ENCODE measurements at regions of chr15 and their contacts with region 1.

Region 1: DNA sequence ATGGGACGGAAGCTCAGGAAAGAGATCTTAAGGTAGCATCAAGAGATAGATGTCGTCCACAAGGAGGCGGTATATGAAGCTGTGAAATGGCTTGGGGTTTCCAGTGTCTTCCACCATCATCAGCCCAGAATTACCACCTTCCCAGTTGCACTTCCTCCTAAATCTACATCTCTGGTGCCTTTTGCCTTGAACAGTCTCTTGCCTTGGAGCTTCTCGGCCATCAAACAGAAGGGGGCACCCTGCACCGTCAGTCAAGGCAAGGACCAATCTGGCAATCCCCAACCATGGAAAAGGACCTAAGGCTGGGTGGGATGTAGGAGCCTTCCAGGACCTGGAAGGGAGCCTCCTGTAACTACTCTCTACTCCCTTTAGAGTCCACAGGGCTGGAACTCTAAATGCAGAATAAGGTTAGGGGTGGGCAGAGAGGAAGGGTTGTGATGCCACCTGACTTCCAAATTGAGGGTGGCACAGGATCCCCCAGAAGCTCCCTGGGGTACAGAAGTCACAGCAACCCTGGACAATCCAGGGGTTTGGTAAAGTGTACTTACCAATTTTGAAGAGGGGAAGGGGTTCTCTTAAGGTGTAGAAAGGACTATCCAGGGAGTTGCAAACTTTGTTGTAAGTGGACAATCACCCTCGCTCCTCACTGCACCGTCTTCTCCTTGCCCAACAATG is 1.0 kb upstream of the RYR3 start:
- DNase-seq: peak in 1 of 2 donors; percentile 33
- ATAC-seq: peak; percentile 70 to 80 (median 76)
- H3K4me3 ChIP-seq: peak overlapping the region; percentile 47
- H3K27ac ChIP-seq: no peak overlapping the region
- H3K4me1 ChIP-seq: peaks cover 6% of the 10 kb centered on the region
- H3K27me3 ChIP-seq: peaks cover 0 to 19% (median 11%) of the 10 kb centered on the region in 3 donors
- CTCF ChIP-seq: peak; percentile 57

Region 2: DNA sequence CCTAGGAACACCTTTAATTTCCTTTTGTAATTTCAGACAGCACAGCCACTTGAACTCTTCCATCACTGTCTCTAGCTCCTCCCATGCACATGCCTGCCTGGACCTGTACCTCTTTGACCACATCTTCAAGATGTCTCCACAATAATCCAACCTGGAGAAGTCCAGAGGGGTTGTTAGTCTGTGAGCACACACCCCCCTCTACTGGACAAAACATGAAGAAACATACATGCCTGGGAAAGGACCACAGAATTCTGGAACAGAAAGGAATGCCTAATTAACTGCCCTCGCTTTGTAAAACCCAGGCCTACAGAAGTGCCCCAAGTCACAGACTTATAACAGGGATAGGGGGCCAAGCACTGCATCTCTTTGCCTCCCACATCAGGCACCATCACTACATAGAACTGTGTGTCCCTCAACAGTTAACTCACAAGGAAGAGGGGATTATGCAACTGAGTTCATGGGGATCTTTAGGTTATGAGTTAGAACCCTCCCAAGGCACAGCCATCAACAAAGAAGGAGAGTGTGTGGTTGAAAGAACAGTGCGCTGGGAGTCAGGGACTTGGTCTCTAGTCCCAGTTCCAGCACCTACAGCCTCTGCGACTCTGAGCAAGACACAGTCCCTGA is 176.9 kb before region 1 on chr15:
- intact Hi-C with region 1: no loop called
- DNase-seq: no peak
- ATAC-seq: peak; percentile 62 to 78 (median 66)
- H3K4me3 ChIP-seq: no peak overlapping the region
- H3K27ac ChIP-seq: no peak overlapping the region
- H3K4me1 ChIP-seq: peaks cover 38% of the 10 kb centered on the region
- H3K27me3 ChIP-seq: no peaks in the 10 kb centered on the region
- CTCF ChIP-seq: peak; percentile 67

Region 3: GRCh38 chr15:33262306-33262705 is 47.4 kb before region 1 on chr15:
- intact Hi-C with region 1: no loop called
- DNase-seq: no peak
- ATAC-seq: no peak
- H3K4me3 ChIP-seq: no peak overlapping the region
- H3K27ac ChIP-seq: no peak overlapping the region
- H3K4me1 ChIP-seq: no peaks in the 10 kb centered on the region
- H3K27me3 ChIP-seq: no peaks in the 10 kb centered on the region
- CTCF ChIP-seq: no peak

Region 4: DNA sequence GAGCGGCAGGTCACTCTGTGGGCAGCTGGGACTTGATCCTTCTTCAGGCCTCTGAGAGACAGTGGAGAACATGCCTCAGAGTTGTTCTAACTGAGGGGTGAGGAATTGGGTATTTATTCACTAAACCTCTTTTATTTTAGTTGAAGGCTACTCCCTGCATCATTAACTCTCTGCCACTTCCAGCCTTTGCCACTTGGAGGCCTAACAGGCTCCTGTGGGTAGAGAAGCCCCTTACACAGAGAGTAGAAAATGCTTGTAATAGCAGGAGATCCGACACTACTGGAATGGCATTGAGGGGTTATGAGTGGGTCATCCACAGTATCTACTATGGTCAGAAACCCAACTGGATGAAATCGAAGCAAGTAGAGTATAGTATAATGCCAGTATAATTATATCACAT is 82.7 kb after region 1 on chr15:
- intact Hi-C with region 1: loop called in 1 of 2 experiments (anchors 5 kb)
- DNase-seq: no peak
- ATAC-seq: no peak
- H3K4me3 ChIP-seq: no peak overlapping the region
- H3K27ac ChIP-seq: no peak overlapping the region
- H3K4me1 ChIP-seq: peaks cover 16% of the 10 kb centered on the region
- H3K27me3 ChIP-seq: no peaks in the 10 kb centered on the region
- CTCF ChIP-seq: no peak

Region 5: GRCh38 chr15:33608714-33609113 is 299.0 kb after region 1 on chr15:
- intact Hi-C with region 1: loop called in 1 of 2 experiments (anchors 10 kb)
- DNase-seq: no peak
- ATAC-seq: no peak
- H3K4me3 ChIP-seq: no peak overlapping the region
- H3K27ac ChIP-seq: no peak overlapping the region
- H3K4me1 ChIP-seq: no peaks in the 10 kb centered on the region
- H3K27me3 ChIP-seq: no peaks in the 10 kb centered on the region
- CTCF ChIP-seq: no peak

Measured in psoas muscle (tissue), 8 donors.